HEK293 (cell line): ENCODE measurements at regions of chr6 and their contacts with region 1.

Region 1: GRCh38 chr6:93419304-93420162 is at the start of gene EPHA7:
- H3K4me3 ChIP-seq: peak within 1 kb of the TSS; percentile 75
- H3K27ac ChIP-seq: peak within 1 kb of the TSS; percentile 97
- H3K4me1 ChIP-seq: peaks cover 7% of the 10 kb centered on the region; the same call in 1 of the 2 replicates
- CTCF ChIP-seq: no peak

Region 2: GRCh38 chr6:93036835-93037234 is 382.7 kb before region 1 on chr6:
- CTCF ChIA-PET with region 1: interaction called, 12 read pairs
- POLR2A ChIA-PET with region 1: interaction called, 7 read pairs
- H3K4me3 ChIP-seq: no peak overlapping the region
- H3K27ac ChIP-seq: no peak overlapping the region
- H3K4me1 ChIP-seq: no peaks in the 10 kb centered on the region
- CTCF ChIP-seq: no peak

Region 3: DNA sequence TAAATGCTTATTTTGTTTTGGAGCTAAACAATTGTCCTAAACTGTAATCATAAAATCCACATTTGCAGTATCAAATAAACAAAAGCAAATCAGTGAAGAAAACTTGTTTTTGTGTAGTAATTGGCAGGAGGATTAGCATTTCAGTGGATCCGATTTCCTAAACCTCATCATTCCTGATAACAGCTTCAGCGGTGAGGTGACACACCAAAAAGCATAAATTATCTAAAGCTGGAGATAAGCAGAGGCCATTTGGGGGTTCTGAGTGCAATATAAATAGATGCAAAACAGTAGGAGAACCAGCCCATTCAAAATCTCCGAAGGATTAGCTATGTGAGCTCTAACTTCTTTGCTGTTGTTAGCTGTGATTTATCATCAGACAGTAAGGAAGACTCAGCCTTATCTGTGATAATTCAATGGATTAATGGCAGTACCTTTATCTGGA is 236.0 kb before region 1 on chr6:
- CTCF ChIA-PET with region 1: interaction called, 7 read pairs
- POLR2A ChIA-PET with region 1: interaction called, 31 read pairs
- H3K4me3 ChIP-seq: no peak overlapping the region
- H3K27ac ChIP-seq: peak overlapping the region; percentile 11
- H3K4me1 ChIP-seq: peaks cover 12% of the 10 kb centered on the region
- CTCF ChIP-seq: no peak

Region 4: GRCh38 chr6:93389192-93389591 is 30.3 kb before region 1 on chr6:
- CTCF ChIA-PET with region 1: interaction called, 5 read pairs
- POLR2A ChIA-PET with region 1: interaction called, 38 read pairs
- H3K4me3 ChIP-seq: no peak overlapping the region
- H3K27ac ChIP-seq: no peak overlapping the region
- H3K4me1 ChIP-seq: peaks cover 30% of the 10 kb centered on the region
- CTCF ChIP-seq: no peak

Region 5: GRCh38 chr6:93437491-93437890 is 18.0 kb after region 1 on chr6:
- CTCF ChIA-PET with region 1: interaction called, 28 read pairs
- POLR2A ChIA-PET with region 1: interaction called, 3 read pairs
- H3K4me3 ChIP-seq: no peak overlapping the region
- H3K27ac ChIP-seq: no peak overlapping the region
- H3K4me1 ChIP-seq: no peaks in the 10 kb centered on the region
- CTCF ChIP-seq: no peak

Region 6: GRCh38 chr6:93498713-93499112 is 79.2 kb after region 1 on chr6:
- CTCF ChIA-PET with region 1: no interaction called
- POLR2A ChIA-PET with region 1: no interaction called
- H3K4me3 ChIP-seq: no peak overlapping the region
- H3K27ac ChIP-seq: no peak overlapping the region
- H3K4me1 ChIP-seq: no peaks in the 10 kb centered on the region
- CTCF ChIP-seq: no peak